Heart left ventricle (tissue), 16 donors: ENCODE measurements at regions of chr15 and their contacts with region 1.

Region 1: DNA sequence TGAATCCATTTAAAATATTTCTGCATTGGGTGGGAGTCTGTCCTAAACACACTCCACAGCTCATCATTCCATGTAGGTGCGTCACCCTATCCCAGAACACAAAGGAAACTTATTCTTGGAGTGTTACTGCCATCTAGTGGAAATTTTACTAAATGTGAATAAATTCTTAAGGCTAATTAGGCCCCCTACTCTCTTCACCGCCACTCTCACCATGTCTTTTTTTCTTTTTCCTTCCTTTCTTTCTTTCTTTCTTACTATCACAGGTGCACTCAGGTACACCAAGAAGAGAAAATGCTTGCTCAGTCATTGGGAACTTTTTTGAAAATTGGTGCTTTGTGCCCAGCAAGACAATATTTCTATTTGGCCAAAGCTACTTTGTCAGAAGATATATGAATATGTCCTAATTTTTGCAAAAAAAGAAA is 26.4 kb upstream of the ATP8B4 start:
- DNase-seq: no peak
- ATAC-seq: peak; percentile 58 to 91 (median 83)
- H3K4me3 ChIP-seq: no peak overlapping the region
- H3K27ac ChIP-seq: no peak overlapping the region
- H3K4me1 ChIP-seq: peaks cover 0 to 6% (median 0%) of the 10 kb centered on the region in 12 donors
- H3K27me3 ChIP-seq: no peaks in the 10 kb centered on the region
- CTCF ChIP-seq: peak; percentile 47 to 73 (median 61)
- POLR2A ChIP-seq: no peak

Region 2: GRCh38 chr15:48352474-48353072 is 1792.9 kb before region 1 on chr15:
- intact Hi-C with region 1: loop called in 3 of 10 experiments (anchors 10 kb)
- DNase-seq: peak in 4 of 5 donors; percentile 28 to 50 (median 36)
- ATAC-seq: peak in 3 of 4 donors; percentile 68 to 71 (median 70)
- H3K4me3 ChIP-seq: peak overlapping the region in 1 of 12 donors; percentile 16
- H3K27ac ChIP-seq: no peak overlapping the region
- H3K4me1 ChIP-seq: peaks cover 0 to 8% (median 0%) of the 10 kb centered on the region in 12 donors
- H3K27me3 ChIP-seq: no peaks in the 10 kb centered on the region
- CTCF ChIP-seq: peak; percentile 67 to 87 (median 76)
- POLR2A ChIP-seq: no peak

Region 3: GRCh38 chr15:48855501-48856440 is 1289.7 kb before region 1 on chr15:
- intact Hi-C with region 1: loop called in 8 of 10 experiments (anchors 5 kb)
- DNase-seq: no peak
- ATAC-seq: peak; percentile 70 to 87 (median 82)
- H3K4me3 ChIP-seq: no peak overlapping the region
- H3K27ac ChIP-seq: peak overlapping the region in 1 of 12 donors; percentile 4
- H3K4me1 ChIP-seq: peaks cover 0 to 11% (median 0%) of the 10 kb centered on the region in 12 donors
- H3K27me3 ChIP-seq: no peaks in the 10 kb centered on the region
- CTCF ChIP-seq: peak in 10 of 12 donors; percentile 12 to 54 (median 40)
- POLR2A ChIP-seq: no peak

Region 4: GRCh38 chr15:49242820-49243219 is 902.6 kb before region 1 on chr15:
- intact Hi-C with region 1: loop called in 7 of 10 experiments (anchors 5 to 10 kb)
- DNase-seq: peak in 1 of 5 donors; percentile 41
- ATAC-seq: peak in 2 of 4 donors; percentile 77 to 84
- H3K4me3 ChIP-seq: no peak overlapping the region
- H3K27ac ChIP-seq: no peak overlapping the region
- H3K4me1 ChIP-seq: peaks cover 0 to 26% (median 5%) of the 10 kb centered on the region in 12 donors
- H3K27me3 ChIP-seq: no peaks in the 10 kb centered on the region
- CTCF ChIP-seq: no peak
- POLR2A ChIP-seq: no peak

Region 5: DNA sequence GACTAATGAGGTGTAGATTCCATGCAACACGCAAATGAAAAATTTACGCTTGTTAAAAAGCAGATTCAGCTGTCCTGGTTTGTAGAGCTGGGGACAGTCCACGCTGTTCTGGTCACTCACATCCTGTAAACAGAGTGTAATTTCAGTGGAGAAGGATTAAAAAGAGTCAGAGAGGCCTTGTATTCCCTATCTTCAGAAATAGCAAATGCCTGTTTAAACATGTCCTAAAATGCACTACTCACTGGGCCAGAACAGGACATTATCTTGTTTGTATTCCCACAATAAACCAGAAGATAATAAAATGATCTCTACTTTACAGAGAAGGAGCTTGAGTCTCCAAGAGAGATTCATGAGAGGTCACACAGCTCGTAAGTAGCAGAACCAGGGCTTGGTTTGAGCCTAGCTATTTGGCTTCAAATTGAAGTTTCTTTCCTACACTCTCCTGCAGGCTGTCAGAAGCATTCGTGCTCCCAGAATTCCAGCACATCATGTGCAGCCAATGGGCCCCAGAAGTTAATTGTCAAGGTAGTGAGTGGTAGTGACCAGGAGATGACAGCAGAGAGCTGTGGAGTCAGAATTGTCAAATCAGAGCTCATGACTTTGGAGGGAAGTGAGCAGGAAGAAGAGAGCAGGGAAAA is 268.9 kb before region 1 on chr15:
- intact Hi-C with region 1: no loop called
- DNase-seq: peak in 1 of 5 donors; percentile 33
- ATAC-seq: peak; percentile 36 to 78 (median 58)
- H3K4me3 ChIP-seq: peak overlapping the region in 3 of 12 donors; percentile 13 to 20 (median 16)
- H3K27ac ChIP-seq: peak overlapping the region; percentile 17 to 88 (median 78)
- H3K4me1 ChIP-seq: peaks cover 0 to 34% (median 5%) of the 10 kb centered on the region in 12 donors
- H3K27me3 ChIP-seq: no peaks in the 10 kb centered on the region
- CTCF ChIP-seq: peak; percentile 17 to 54 (median 42)
- POLR2A ChIP-seq: no peak